Breast epithelium (tissue), 4 donors: ENCODE measurements at regions of chr19 and their contacts with region 1.

Region 1: DNA sequence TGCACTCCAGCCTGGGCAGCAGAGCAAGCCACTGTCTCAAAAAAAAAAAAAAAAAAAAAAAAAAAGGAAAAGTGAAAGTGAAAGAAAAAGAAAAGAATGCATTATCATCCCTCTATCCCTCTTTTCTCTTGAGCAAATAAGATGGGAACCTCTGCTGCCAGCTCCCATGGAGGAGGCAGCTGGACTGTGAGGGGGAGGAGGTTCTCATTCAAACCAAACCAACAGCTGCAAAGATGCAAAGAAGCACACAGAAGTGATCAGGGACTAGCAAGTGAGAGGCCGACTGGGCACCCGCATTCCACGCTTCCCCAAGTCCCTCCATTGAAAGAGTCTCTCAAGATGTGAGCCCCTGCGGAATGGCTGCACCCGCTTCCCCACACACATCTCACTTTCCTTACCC is 63.5 kb downstream of the TSHZ3 start:
- DNase-seq: no peak
- H3K4me3 ChIP-seq: peak overlapping the region; percentile 4 to 35 (median 22)
- H3K27ac ChIP-seq: no peak overlapping the region
- H3K4me1 ChIP-seq: no peaks in the 10 kb centered on the region
- H3K27me3 ChIP-seq: no peaks in the 10 kb centered on the region
- CTCF ChIP-seq: no peak
- POLR2A ChIP-seq: no peak

Region 2: GRCh38 chr19:31300422-31300821 is 14.7 kb after region 1 on chr19:
- intact Hi-C with region 1: no loop called
- DNase-seq: no peak
- H3K4me3 ChIP-seq: no peak overlapping the region
- H3K27ac ChIP-seq: no peak overlapping the region
- H3K4me1 ChIP-seq: no peaks in the 10 kb centered on the region
- H3K27me3 ChIP-seq: no peaks in the 10 kb centered on the region
- CTCF ChIP-seq: no peak
- POLR2A ChIP-seq: no peak

Region 3: GRCh38 chr19:31318790-31319425 is 33.2 kb after region 1 on chr19:
- intact Hi-C with region 1: loop called (anchors 1 kb)
- DNase-seq: no peak
- H3K4me3 ChIP-seq: no peak overlapping the region
- H3K27ac ChIP-seq: no peak overlapping the region
- H3K4me1 ChIP-seq: peaks cover 0 to 6% of the 10 kb centered on the region in 2 donors
- H3K27me3 ChIP-seq: no peaks in the 10 kb centered on the region
- CTCF ChIP-seq: no peak
- POLR2A ChIP-seq: no peak